ENCODE measurements at regions of chr20 and their contacts with region 1.

Region 1: DNA sequence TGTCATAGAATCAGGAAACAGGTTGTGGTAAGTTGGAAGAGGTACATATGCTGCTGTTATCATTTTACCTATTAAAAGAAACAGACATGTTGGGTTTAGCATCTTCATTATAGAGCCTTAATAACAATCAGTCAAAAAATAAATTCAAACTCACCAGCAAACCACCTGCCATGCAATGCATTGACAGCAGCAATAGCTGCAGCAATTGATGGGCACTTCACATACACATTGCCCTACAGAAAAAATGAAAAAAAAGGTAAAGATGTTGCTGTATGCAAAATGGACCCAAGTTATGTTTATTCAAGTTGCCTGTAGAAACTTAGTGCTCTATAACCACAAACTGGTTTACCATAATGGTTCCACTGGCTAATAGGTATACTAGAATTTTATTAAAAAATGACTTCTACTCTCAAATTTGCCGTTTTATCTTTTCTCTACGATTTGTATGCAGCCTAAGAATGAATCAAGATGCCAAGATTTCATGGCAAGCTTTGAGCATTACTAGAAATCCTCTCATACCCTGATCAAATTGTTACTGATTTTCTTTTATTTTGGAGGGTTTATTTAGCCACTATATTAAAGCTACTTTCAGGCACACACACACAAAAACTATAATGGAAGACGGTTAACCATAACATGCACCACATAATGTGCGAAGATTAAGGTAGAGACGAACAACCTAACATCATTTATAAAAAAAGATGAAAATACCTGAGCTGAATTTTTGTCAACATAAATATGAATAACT is 5.5 kb downstream of the ROMO1 start:
- DNase-seq: no peak
- ATAC-seq: no peak
- H3K4me3 ChIP-seq: no peak overlapping the region
- H3K4me3 Mint-ChIP-seq: no peak overlapping the region
- H3K27ac ChIP-seq: no peak overlapping the region
- H3K27ac Mint-ChIP-seq: no peak overlapping the region
- H3K4me1 ChIP-seq: peaks cover 20% of the 10 kb centered on the region
- H3K4me1 Mint-ChIP-seq: peaks cover 46% of the 10 kb centered on the region
- H3K27me3 ChIP-seq: no peaks in the 10 kb centered on the region
- H3K27me3 Mint-ChIP-seq: no peaks in the 10 kb centered on the region
- CTCF ChIP-seq: no peak

Region 2: GRCh38 chr20:35601008-35601973 is 103.4 kb before region 1 on chr20:
- CTCF ChIA-PET with region 1: interaction called, 13 read pairs
- POLR2A ChIA-PET with region 1: interaction called, 5 read pairs
- intact Hi-C with region 1: loop called in 1 of 2 experiments (anchors 1 kb)
- DNase-seq: peak; percentile 59 to 90 (median 83)
- ATAC-seq: peak; percentile 92
- H3K4me3 ChIP-seq: peak overlapping the region; percentile 58 to 59
- H3K4me3 Mint-ChIP-seq: peak overlapping the region; percentile 82
- H3K27ac ChIP-seq: no peak overlapping the region
- H3K27ac Mint-ChIP-seq: no peak overlapping the region
- H3K4me1 ChIP-seq: peaks cover 16% of the 10 kb centered on the region
- H3K4me1 Mint-ChIP-seq: peaks cover 11% of the 10 kb centered on the region
- H3K27me3 ChIP-seq: peaks cover 5 to 8% of the 10 kb centered on the region in 2 experiments
- H3K27me3 Mint-ChIP-seq: peaks cover 14% of the 10 kb centered on the region
- CTCF ChIP-seq: peak; percentile 66

Region 3: DNA sequence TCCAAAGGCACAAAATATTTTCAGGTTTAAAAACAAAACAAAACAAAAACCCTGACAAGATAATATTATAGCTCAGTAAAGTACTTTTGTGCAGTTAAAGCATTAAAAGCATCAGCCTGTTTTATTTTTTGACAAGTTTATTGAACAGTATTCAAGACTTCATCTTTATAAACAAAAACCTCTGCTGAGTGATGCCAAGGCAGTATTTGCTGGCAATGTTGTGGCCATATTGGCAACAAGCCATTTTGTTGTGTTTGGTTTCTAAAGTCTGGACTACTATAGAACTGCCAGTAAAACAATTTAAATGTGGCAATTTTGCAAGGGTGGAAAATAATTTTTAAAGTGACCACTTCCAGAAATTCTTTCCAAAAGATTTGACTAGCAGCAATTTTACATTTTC is 55.9 kb before region 1 on chr20:
- CTCF ChIA-PET with region 1: no interaction called
- POLR2A ChIA-PET with region 1: no interaction called
- intact Hi-C with region 1: no loop called
- DNase-seq: no peak
- ATAC-seq: no peak
- H3K4me3 ChIP-seq: no peak overlapping the region
- H3K4me3 Mint-ChIP-seq: no peak overlapping the region
- H3K27ac ChIP-seq: no peak overlapping the region
- H3K27ac Mint-ChIP-seq: peak overlapping the region; percentile 52
- H3K4me1 ChIP-seq: peaks cover 26% of the 10 kb centered on the region
- H3K4me1 Mint-ChIP-seq: peaks cover 76% of the 10 kb centered on the region
- H3K27me3 ChIP-seq: no peaks in the 10 kb centered on the region
- H3K27me3 Mint-ChIP-seq: no peaks in the 10 kb centered on the region
- CTCF ChIP-seq: no peak